ENCODE measurements at regions of chr2 and their contacts with region 1.

Region 1: GRCh38 chr2:138373993-138374408 is 127.6 kb upstream of the SPOPL start:
- DNase-seq: no peak

Region 2: DNA sequence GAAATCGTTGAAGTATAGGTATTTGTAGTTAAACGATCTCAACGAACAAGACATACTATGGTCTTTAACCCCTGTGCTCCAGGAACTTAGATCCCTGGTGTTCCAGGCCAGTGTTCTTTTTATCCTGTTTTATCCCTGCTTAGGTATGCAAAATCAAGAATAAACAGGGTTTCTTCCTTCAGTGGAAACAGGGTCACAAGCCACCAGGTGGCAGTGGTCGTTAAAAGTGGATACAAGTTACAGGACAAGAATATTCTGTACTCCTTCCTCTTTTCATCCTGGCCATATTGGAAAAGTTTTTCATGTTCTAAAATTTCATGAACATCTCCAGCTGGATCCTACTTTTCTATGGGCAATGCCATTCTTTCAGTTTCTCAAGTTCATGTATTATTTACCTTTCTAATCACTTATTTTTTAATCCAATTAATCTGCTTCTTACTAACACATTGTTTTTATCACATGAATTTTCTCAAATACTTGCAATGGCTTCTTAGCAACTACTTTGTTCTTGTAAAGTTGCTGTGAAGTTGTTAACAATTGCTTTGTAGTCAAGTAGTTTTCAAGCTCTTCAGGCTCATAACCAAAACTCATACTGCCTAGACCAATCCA is 426.2 kb before region 1 on chr2:
- intact Hi-C with region 1: loop called (anchors 2 kb)
- DNase-seq: peak in 9 of 10 donors; percentile 37 to 93 (median 73)

Region 3: GRCh38 chr2:138787053-138787666 is 413.2 kb after region 1 on chr2:
- intact Hi-C with region 1: loop called (anchors 5 kb)
- DNase-seq: no peak

Measured in posterior cingulate gyrus (tissue), 11 donors.